ENCODE measurements at regions of chr17 and their contacts with region 1.

Region 1: GRCh38 chr17:77609553-77610517 is 348.7 kb upstream of the TNRC6C start:
- DNase-seq: no peak
- ATAC-seq: no peak
- H3K4me3 ChIP-seq: no peak overlapping the region
- H3K27ac ChIP-seq: peak overlapping the region in 1 of 2 experiments; percentile 11; a peak in 1 of 6 replicates
- H3K4me1 ChIP-seq: peaks cover 3% of the 10 kb centered on the region
- CTCF ChIP-seq: no peak
- EP300 ChIP-seq: no peak
- POLR2A ChIP-seq: no peak
- RAD21 ChIP-seq: no peak

Region 2: DNA sequence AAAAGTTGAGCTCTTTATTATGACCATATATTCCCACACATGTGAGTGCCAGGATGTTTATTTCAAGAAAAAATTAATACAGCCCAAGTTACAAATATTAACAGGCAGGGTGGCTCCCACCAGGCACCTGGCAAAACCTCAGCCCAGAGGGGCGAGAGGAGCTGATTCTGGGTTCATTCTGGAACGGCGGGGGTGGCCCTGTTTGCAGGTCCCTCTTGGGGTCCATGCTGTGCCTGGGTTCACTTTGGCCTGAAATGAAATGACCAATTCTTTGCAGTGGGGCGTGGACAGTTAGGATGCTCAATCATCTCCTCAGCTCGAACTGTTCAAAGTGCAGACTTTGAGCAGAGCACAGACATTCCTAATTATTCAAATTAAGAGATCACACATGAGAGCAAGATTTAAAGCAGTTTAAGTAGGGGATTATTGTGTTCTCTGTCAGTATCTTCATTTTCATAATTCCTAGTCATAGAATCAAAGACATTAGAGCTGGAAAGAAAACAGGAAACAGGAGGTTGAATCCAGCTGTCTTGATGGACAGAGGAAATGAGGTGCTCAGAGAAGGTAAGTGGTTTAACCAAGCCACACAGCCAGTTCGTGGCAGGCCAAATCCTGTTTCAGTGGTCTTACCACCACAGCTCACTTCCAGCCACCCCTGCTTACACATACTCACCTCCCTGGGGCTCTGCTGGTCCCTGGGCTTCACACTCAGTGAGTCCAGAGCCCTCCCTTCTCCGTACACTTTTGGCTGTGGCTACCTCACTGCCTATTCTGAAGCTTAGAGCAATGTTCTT is 15.2 kb before region 1 on chr17:
- CTCF ChIA-PET with region 1: interaction called, 11 read pairs
- POLR2A ChIA-PET with region 1: no interaction called
- DNase-seq: no peak
- ATAC-seq: no peak
- H3K4me3 ChIP-seq: no peak overlapping the region
- H3K27ac ChIP-seq: no peak overlapping the region
- H3K4me1 ChIP-seq: no peaks in the 10 kb centered on the region
- CTCF ChIP-seq: no peak
- EP300 ChIP-seq: no peak
- POLR2A ChIP-seq: no peak
- RAD21 ChIP-seq: no peak

Region 3: DNA sequence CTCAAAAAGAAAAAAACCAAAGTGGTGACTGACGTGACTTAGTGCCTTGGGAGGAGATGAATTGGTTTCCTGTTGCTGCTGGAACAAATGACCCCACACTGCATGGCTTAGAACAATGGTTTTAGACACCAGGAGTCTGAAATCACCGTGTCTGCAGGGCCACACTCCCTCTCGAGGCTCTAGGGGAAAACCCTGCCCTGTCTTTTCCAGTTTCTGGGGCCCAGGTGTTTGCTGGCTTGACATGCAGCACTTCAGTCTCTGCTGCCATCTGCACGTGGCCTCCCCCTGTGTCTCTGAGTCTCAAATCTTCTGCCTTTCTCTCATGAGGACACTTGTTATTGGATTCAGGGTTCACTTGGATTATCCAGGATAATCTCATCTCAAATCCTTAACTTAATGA is 24.9 kb after region 1 on chr17:
- CTCF ChIA-PET with region 1: no interaction called
- POLR2A ChIA-PET with region 1: no interaction called
- DNase-seq: no peak
- ATAC-seq: no peak
- H3K4me3 ChIP-seq: no peak overlapping the region
- H3K27ac ChIP-seq: no peak overlapping the region
- H3K4me1 ChIP-seq: no peaks in the 10 kb centered on the region
- CTCF ChIP-seq: no peak
- EP300 ChIP-seq: no peak
- POLR2A ChIP-seq: no peak
- RAD21 ChIP-seq: no peak

Measured in A549 (cell line).